GM12878 (cell line): ENCODE measurements at regions of chr21 and their contacts with region 1.

Region 1: GRCh38 chr21:37267269-37268184 is at the start of gene VPS26C:
- DNase-seq: peak; percentile 99
- ATAC-seq: peak; percentile 95
- H3K4me3 ChIP-seq: peak within 1 kb of the TSS; percentile 84
- H3K27ac ChIP-seq: peak within 1 kb of the TSS; percentile 94
- H3K4me1 ChIP-seq: no peaks in the 10 kb centered on the region
- H3K27me3 ChIP-seq: no peaks in the 10 kb centered on the region
- CTCF ChIP-seq: no peak
- EP300 ChIP-seq: peak; percentile 43 to 49; a peak in 1 of 4 replicates
- POLR2A ChIP-seq: peak; percentile 96
- RAD21 ChIP-seq: no peak
- polyA plus RNA-seq, gene VPS26C: 36.8 to 39.6 TPM

Region 2: GRCh38 chr21:37072988-37073416 is 194.5 kb before region 1 on chr21 and contains the starts of genes PIGP and TTC3:
- CTCF ChIA-PET with region 1: no interaction called
- POLR2A ChIA-PET with region 1: no interaction called
- RAD21 ChIA-PET with region 1: no interaction called
- SMC1A ChIA-PET with region 1: no interaction called
- in situ Hi-C with region 1: no loop called
- intact Hi-C with region 1: loop called (anchors 2 kb)
- DNase-seq: peak; percentile 70
- ATAC-seq: peak; percentile 78
- H3K4me3 ChIP-seq: peak within 1 kb of the TSS; percentile 90
- H3K27ac ChIP-seq: peak within 1 kb of the TSS; percentile 96
- H3K4me1 ChIP-seq: no peaks in the 10 kb centered on the region; the same call in 1 of the 2 replicates
- H3K27me3 ChIP-seq: no peaks in the 10 kb centered on the region
- CTCF ChIP-seq: no peak
- EP300 ChIP-seq: no peak
- POLR2A ChIP-seq: peak; percentile 87
- RAD21 ChIP-seq: no peak
- polyA plus RNA-seq, gene PIGP: 59.4 to 65.0 TPM
- polyA plus RNA-seq, gene TTC3: 23.1 to 28.6 TPM

Region 3: GRCh38 chr21:37166733-37167132 is 100.8 kb before region 1 on chr21:
- CTCF ChIA-PET with region 1: no interaction called
- POLR2A ChIA-PET with region 1: no interaction called
- RAD21 ChIA-PET with region 1: interaction called, 3 read pairs
- SMC1A ChIA-PET with region 1: interaction called, 3 read pairs
- in situ Hi-C with region 1: no loop called
- intact Hi-C with region 1: loop called (anchors 5 kb)
- DNase-seq: no peak
- ATAC-seq: peak; percentile 73
- H3K4me3 ChIP-seq: no peak overlapping the region
- H3K27ac ChIP-seq: no peak overlapping the region
- H3K4me1 ChIP-seq: no peaks in the 10 kb centered on the region
- H3K27me3 ChIP-seq: no peaks in the 10 kb centered on the region
- CTCF ChIP-seq: peak; percentile 24 to 56 (median 33); a peak in 4 of 6 replicates
- EP300 ChIP-seq: no peak
- POLR2A ChIP-seq: no peak
- RAD21 ChIP-seq: peak; percentile 69

Region 4: GRCh38 chr21:37220981-37221664 is 46.4 kb before region 1 on chr21:
- CTCF ChIA-PET with region 1: no interaction called
- POLR2A ChIA-PET with region 1: interaction called, 3 read pairs
- RAD21 ChIA-PET with region 1: no interaction called
- SMC1A ChIA-PET with region 1: no interaction called
- in situ Hi-C with region 1: no loop called
- intact Hi-C with region 1: loop called (anchors 2 kb)
- DNase-seq: peak; percentile 86
- ATAC-seq: peak; percentile 96
- H3K4me3 ChIP-seq: peak overlapping the region; percentile 91
- H3K27ac ChIP-seq: peak overlapping the region; percentile 73
- H3K4me1 ChIP-seq: peaks cover 9% of the 10 kb centered on the region
- H3K27me3 ChIP-seq: no peaks in the 10 kb centered on the region
- CTCF ChIP-seq: peak; percentile 54 to 84 (median 62)
- EP300 ChIP-seq: no peak
- POLR2A ChIP-seq: peak; percentile 92
- RAD21 ChIP-seq: peak; percentile 77

Region 5: GRCh38 chr21:37338671-37339551 is 71.4 kb after region 1 on chr21:
- CTCF ChIA-PET with region 1: no interaction called
- POLR2A ChIA-PET with region 1: no interaction called
- RAD21 ChIA-PET with region 1: no interaction called
- SMC1A ChIA-PET with region 1: no interaction called
- in situ Hi-C with region 1: no loop called
- intact Hi-C with region 1: no loop called
- DNase-seq: no peak
- ATAC-seq: no peak
- H3K4me3 ChIP-seq: no peak overlapping the region
- H3K27ac ChIP-seq: no peak overlapping the region
- H3K4me1 ChIP-seq: no peaks in the 10 kb centered on the region
- H3K27me3 ChIP-seq: no peaks in the 10 kb centered on the region
- CTCF ChIP-seq: no peak
- EP300 ChIP-seq: no peak
- POLR2A ChIP-seq: no peak
- RAD21 ChIP-seq: no peak